Colonic mucosa (tissue), 4 donors: ENCODE measurements at regions of chr4 and their contacts with region 1.

Region 1: DNA sequence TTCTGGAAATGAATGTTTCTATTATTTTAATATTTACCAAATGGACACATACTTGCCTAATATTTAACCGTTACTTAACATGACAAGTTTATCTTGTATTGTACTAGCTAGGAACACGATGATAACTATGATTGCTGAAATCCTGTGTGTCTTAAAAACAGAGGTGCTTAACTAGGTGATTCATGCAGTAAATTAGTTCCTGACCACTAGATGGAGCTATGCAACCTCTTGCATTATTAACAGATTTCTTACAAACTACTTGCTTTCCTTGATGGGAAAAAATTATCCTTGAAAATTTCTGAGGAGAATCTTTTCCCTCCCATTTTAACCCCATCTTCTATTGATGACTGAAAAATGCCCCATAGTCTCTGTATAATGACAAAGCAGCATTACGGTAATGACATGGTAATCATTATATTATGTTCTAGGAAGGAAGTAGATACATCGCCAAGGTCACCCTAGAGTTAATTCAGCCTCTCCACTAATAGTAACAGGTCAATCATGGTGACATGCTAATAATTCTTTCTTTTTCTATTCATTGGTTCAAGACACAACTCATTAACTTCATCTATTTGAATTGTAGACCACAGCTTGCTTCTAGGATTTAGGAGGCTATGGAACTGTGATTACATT is 844.2 kb downstream of the RAPGEF2 start:
- DNase-seq: no peak
- H3K4me3 ChIP-seq: no peak overlapping the region
- H3K27ac ChIP-seq: no peak overlapping the region
- H3K4me1 ChIP-seq: no peaks in the 10 kb centered on the region
- H3K27me3 ChIP-seq: no peaks in the 10 kb centered on the region
- CTCF ChIP-seq: peak; percentile 53

Region 2: DNA sequence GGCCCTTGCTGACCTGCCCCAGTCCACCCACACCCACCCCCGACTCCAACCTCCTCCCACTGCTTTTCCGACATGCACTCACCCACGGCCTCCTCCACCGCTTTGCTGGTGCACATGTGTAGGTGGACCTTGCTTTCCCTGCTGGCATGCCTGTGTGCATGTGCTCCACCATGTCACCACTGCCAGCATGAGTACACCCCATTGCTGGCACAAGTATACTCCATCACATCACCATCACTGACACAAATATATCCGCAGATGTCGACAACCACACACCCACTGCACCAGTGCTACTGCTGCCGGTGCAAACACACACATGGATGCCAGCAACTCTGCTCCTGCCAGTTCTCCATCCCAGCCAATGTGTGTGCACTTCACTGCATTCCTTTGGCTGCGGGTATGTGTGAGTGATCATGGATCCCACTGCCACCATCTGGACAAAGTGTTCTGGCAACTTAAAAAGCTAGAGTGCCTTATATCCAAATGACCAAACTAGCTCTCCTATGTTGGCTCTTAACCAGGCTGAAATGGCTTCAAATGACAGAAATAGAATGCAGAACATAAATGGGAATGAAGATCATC is 228.1 kb after region 1 on chr4:
- intact Hi-C with region 1: loop called (anchors 10 kb)
- DNase-seq: no peak
- H3K4me3 ChIP-seq: no peak overlapping the region
- H3K27ac ChIP-seq: no peak overlapping the region
- H3K4me1 ChIP-seq: no peaks in the 10 kb centered on the region
- H3K27me3 ChIP-seq: no peaks in the 10 kb centered on the region
- CTCF ChIP-seq: no peak